Activated CD4-positive, alpha-beta T cell treated with anti-CD3 and anti-CD28 coated beads for 36 hours (primary cell): ENCODE measurements at regions of chr7 and their contacts with region 1.

Region 1: DNA sequence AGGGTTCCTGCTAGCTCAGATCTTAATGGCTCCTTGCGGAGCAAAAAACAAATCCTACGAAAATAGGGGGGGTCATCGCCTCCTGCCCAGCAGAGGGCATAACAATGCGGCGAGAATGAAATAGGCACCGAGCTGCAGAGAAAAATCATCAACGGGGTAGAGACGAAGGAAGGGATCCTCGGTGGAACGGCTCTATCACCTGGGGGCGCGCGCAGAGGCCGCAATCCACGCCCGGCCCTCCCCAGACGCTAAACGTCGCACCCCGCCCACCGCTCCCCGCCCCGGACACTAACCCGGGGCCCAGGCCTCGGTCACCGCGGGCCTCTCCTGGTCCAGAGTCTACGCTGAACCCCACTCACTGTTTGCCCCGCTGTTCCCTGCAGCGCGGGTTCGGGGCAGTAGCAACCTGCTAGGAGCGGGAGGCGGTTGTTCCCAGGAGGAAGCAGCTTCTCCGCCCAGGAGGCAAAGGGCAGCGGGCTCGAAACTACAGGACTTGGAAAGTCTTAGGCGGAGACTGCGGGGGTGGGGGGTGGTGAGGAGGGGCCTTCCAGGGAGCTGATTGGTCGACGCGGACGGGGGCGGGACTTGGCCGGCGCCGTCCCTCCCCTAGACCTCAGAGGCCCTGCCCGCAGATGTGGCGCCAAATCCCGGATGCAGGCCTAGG is at the start of gene TCAF1:
- DNase-seq: peak; percentile 95
- ATAC-seq: peak; percentile 95
- H3K4me3 Mint-ChIP-seq: peak within 1 kb of the TSS; percentile 88
- H3K27ac Mint-ChIP-seq: peak within 1 kb of the TSS; percentile 91
- H3K4me1 Mint-ChIP-seq: peaks cover 26% of the 10 kb centered on the region
- H3K27me3 Mint-ChIP-seq: no peaks in the 10 kb centered on the region
- total RNA-seq, gene TCAF1: 16.5 to 17.7 TPM

Region 2: GRCh38 chr7:143885951-143886350 is 15.8 kb before region 1 on chr7:
- CTCF ChIA-PET with region 1: interaction called, 15 read pairs
- POLR2A ChIA-PET with region 1: no interaction called
- intact Hi-C with region 1: no loop called
- DNase-seq: no peak
- ATAC-seq: no peak
- H3K4me3 Mint-ChIP-seq: no peak overlapping the region
- H3K27ac Mint-ChIP-seq: no peak overlapping the region
- H3K4me1 Mint-ChIP-seq: peaks cover 12% of the 10 kb centered on the region
- H3K27me3 Mint-ChIP-seq: peaks cover 39% of the 10 kb centered on the region

Region 3: GRCh38 chr7:143929224-143929920 is 27.6 kb after region 1 on chr7:
- CTCF ChIA-PET with region 1: interaction called, 7 read pairs
- POLR2A ChIA-PET with region 1: interaction called, 7 read pairs
- intact Hi-C with region 1: loop called (anchors 1 to 2 kb)
- DNase-seq: peak; percentile 38
- ATAC-seq: peak; percentile 100
- H3K4me3 Mint-ChIP-seq: no peak overlapping the region
- H3K27ac Mint-ChIP-seq: no peak overlapping the region
- H3K4me1 Mint-ChIP-seq: peaks cover 12% of the 10 kb centered on the region
- H3K27me3 Mint-ChIP-seq: peaks cover 11% of the 10 kb centered on the region

Region 4: DNA sequence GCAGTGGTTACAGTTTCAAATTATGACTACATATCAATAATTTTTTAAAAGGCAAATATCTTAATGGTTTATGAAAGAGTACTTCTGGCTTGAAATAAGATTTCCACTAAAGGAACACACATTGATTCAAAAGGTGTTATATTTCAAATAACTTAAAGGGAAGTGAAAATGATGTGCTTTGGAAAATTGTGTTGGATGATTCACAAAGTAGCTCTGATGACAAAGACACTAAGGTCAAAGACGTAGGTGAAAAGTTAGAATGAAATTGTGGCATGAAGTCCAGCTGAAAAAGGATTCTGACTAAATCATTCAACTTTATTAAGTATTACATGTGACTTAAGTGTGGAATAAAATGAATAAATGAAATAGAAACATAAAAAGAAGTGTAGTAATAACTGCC is 126.2 kb after region 1 on chr7:
- CTCF ChIA-PET with region 1: interaction called, 4 read pairs
- POLR2A ChIA-PET with region 1: no interaction called
- intact Hi-C with region 1: loop called in 1 of 2 experiments (anchors 1 kb)
- DNase-seq: no peak
- ATAC-seq: peak; percentile 44
- H3K4me3 Mint-ChIP-seq: no peak overlapping the region
- H3K27ac Mint-ChIP-seq: no peak overlapping the region
- H3K4me1 Mint-ChIP-seq: peaks cover 6% of the 10 kb centered on the region
- H3K27me3 Mint-ChIP-seq: peaks cover 10% of the 10 kb centered on the region

Region 5: DNA sequence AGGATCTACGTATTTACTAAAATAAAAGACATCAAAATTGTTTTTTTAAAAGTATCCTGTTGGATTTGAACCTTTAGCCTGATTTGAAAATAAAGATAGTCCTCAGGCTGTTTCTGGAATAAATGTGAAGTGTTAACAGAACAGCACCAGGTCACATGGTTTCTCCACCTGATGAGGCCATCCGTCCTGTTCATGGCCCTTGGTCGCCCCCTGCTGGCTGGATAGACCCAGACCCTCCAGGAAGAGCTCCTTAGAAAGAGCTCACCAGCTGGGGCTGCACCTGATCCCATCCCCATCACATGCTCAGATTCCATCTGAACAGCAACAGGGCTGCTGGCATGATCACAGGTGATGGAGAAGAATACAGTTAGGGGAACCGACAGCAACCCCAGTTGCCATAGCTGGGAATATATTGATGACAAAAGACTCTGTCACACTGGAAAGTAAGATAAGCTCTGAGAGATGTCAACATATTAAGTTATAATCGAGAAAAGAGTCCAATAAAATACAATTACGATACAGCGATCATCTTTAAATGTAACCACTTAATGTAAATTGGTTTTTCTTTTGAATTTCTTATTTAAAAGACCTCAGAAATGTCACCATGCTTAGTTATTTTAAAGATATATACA is 226.0 kb after region 1 on chr7:
- CTCF ChIA-PET with region 1: interaction called, 16 read pairs
- POLR2A ChIA-PET with region 1: no interaction called
- intact Hi-C with region 1: loop called (anchors 1 to 10 kb)
- DNase-seq: peak; percentile 96
- ATAC-seq: peak; percentile 100
- H3K4me3 Mint-ChIP-seq: no peak overlapping the region
- H3K27ac Mint-ChIP-seq: no peak overlapping the region
- H3K4me1 Mint-ChIP-seq: no peaks in the 10 kb centered on the region
- H3K27me3 Mint-ChIP-seq: peaks cover 2% of the 10 kb centered on the region

Region 6: DNA sequence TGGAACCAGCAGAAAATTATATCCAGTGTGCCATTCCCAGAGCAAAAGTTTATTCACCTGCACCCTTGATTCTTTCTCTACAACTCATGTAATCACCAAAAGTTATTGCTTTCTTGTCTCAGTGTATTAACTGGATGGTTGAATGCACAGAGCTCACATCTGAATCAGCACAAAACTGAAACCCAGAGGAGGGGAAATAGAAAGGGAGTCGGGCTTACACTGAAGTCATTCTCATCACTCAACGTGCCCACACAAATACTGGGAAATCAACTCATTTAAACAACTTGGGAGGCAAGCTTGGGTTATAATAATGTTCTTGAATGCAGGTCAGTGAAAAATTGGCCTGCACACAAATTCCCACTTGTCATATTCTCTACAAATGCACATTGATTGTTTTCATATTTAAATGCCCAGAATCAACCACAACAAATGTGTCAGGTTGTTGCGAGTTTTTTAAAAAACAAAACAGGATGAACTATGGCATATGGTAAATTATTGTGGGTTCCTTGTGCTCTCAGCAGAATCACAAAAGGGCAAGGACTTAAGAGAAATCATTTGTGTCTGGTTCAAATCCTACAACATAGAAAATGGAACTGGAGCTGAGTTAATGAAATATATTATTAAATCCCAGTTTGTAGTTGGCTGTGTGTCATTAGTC is 627.6 kb after region 1 on chr7:
- CTCF ChIA-PET with region 1: no interaction called
- POLR2A ChIA-PET with region 1: no interaction called
- intact Hi-C with region 1: no loop called
- DNase-seq: no peak
- ATAC-seq: peak; percentile 80
- H3K4me3 Mint-ChIP-seq: no peak overlapping the region
- H3K27ac Mint-ChIP-seq: no peak overlapping the region
- H3K4me1 Mint-ChIP-seq: peaks cover 7% of the 10 kb centered on the region
- H3K27me3 Mint-ChIP-seq: no peaks in the 10 kb centered on the region